ENCODE measurements at regions of chr1 and their contacts with region 1.

Region 1: GRCh38 chr1:202599677-202600431 is 110.4 kb downstream of the SYT2 start:
- DNase-seq: peak; percentile 80
- ATAC-seq: peak; percentile 93

Region 2: DNA sequence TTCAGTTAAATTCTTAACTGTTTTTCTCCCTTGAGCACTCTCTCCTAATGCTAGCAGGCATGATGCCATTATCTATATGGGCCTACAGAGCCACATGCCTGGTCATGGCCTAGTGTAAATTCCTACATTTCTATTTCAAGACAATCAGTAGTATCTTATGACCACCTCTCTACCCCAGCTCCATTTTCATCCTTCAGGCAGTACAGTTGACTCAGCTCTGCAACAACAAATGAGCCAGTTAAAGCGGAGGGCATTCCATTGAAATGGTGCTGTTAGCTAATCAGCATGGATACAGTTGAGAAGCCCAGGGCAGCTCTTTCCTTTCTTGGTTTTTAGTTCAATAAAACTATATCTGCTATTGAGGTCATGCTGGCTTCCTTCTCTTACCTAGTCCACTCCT is 101.3 kb before region 1 on chr1:
- intact Hi-C with region 1: loop called (anchors 10 kb)
- DNase-seq: no peak
- ATAC-seq: no peak

Measured in sciatic nerve (tissue), 2 donors.